ENCODE measurements at regions of chr1 and their contacts with region 1.

Region 1: DNA sequence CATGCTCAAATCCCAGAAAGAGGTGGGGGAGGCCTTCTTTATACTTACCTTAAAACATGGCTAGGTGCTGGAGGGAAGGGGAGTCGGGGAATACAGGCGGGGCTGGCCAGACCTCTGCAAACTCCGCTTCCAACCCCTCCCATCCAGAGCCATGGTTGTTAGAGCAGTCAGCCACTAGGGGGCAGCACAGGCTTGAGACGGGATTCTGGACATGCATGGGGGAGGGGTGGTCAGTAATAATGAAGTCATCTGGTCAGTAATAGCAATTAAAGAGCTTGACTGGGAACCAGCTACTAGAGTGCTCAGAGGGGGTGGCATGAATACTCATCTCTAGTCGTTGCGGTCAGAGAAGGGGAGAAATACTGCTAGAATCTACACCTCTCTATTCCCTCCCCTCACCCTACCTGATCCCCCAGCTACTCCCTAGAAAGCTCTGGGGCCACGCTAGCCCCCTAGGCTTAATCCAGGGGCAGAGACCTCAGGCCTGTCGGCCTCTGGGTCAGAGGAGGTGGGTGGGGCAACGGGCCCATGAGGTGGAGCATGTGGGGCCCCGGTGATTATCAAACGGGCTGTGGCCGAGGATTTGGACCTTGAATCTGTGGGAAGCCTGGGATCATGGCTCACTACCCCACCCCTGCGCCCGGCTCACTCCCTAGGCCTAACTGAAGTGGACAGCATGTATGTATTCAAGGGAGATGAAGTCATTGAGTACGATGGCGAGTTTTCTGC is 2.9 kb downstream of the CASQ1 start:
- DNase-seq: peak; percentile 65
- H3K4me3 ChIP-seq: no peak overlapping the region
- H3K27ac ChIP-seq: no peak overlapping the region
- H3K4me1 ChIP-seq: peaks cover 3% of the 10 kb centered on the region
- H3K27me3 ChIP-seq: peaks cover 2% of the 10 kb centered on the region
- CTCF ChIP-seq: peak; percentile 97

Region 2: GRCh38 chr1:160219062-160219929 is 26.0 kb after region 1 on chr1:
- CTCF ChIA-PET with region 1: interaction called, 61 read pairs
- dilution Hi-C with region 1: no loop called
- in situ Hi-C with region 1: no loop called
- intact Hi-C with region 1: loop called (anchors 1 kb)
- DNase-seq: peak; percentile 71
- H3K4me3 ChIP-seq: no peak overlapping the region
- H3K27ac ChIP-seq: peak overlapping the region; percentile 63
- H3K4me1 ChIP-seq: peaks cover 47% of the 10 kb centered on the region
- H3K27me3 ChIP-seq: no peaks in the 10 kb centered on the region
- CTCF ChIP-seq: peak; percentile 46 to 66

Region 3: GRCh38 chr1:160291248-160292220 is 98.3 kb after region 1 on chr1:
- CTCF ChIA-PET with region 1: interaction called, 17 read pairs
- dilution Hi-C with region 1: loop called (anchors 5 kb)
- in situ Hi-C with region 1: loop called in 1 of 2 experiments (anchors 5 kb)
- intact Hi-C with region 1: loop called (anchors 1 kb)
- DNase-seq: peak; percentile 51
- H3K4me3 ChIP-seq: no peak overlapping the region
- H3K27ac ChIP-seq: no peak overlapping the region
- H3K4me1 ChIP-seq: no peaks in the 10 kb centered on the region
- H3K27me3 ChIP-seq: no peaks in the 10 kb centered on the region
- CTCF ChIP-seq: peak; percentile 78 to 84

Region 4: GRCh38 chr1:160416369-160416768 is 223.1 kb after region 1 on chr1:
- CTCF ChIA-PET with region 1: no interaction called
- dilution Hi-C with region 1: no loop called
- in situ Hi-C with region 1: no loop called
- intact Hi-C with region 1: loop called (anchors 1 kb)
- DNase-seq: peak; percentile 56
- H3K4me3 ChIP-seq: no peak overlapping the region
- H3K27ac ChIP-seq: no peak overlapping the region
- H3K4me1 ChIP-seq: peaks cover 15% of the 10 kb centered on the region
- H3K27me3 ChIP-seq: no peaks in the 10 kb centered on the region
- CTCF ChIP-seq: peak; percentile 62 to 84

Region 5: DNA sequence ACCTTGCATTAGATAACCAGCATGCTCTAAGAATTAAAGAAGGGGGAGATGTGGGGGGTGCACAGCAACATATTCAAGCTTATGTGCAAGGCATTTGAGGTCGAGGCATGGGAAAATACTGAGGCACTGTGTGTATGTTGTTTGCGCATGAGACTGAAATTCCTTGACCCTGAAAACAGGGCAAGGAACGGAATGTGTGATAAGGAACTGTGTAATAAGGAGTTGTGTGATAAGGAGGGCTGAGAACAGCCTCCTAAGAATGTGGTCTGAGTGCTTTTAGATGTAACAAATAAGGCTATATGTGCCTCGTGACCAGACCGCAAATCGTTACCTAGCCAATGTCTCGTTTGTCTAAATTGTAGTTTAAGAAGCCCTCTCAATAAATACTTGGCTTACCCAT is 718.2 kb after region 1 on chr1:
- CTCF ChIA-PET with region 1: interaction called, 13 read pairs
- dilution Hi-C with region 1: no loop called
- in situ Hi-C with region 1: no loop called
- intact Hi-C with region 1: no loop called
- DNase-seq: no peak
- H3K4me3 ChIP-seq: no peak overlapping the region
- H3K27ac ChIP-seq: no peak overlapping the region
- H3K4me1 ChIP-seq: no peaks in the 10 kb centered on the region
- H3K27me3 ChIP-seq: no peaks in the 10 kb centered on the region
- CTCF ChIP-seq: no peak

Measured in mammary epithelial cell (primary cell).